HepG2 (cell line): ENCODE measurements at regions of chr2 and their contacts with region 1.

Region 1: GRCh38 chr2:223459328-223459939 is 142.7 kb downstream of the SCG2 start:
- DNase-seq: no peak
- ATAC-seq: no peak
- H3K4me3 ChIP-seq: no peak overlapping the region
- H3K27ac ChIP-seq: no peak overlapping the region
- H3K4me1 ChIP-seq: no peaks in the 10 kb centered on the region
- H3K27me3 ChIP-seq: no peaks in the 10 kb centered on the region
- CTCF ChIP-seq: no peak
- EP300 ChIP-seq: no peak
- POLR2A ChIP-seq: no peak
- RAD21 ChIP-seq: no peak

Region 2: GRCh38 chr2:223601932-223602666 is 142.7 kb after region 1 on chr2 and contains the start of gene SCG2:
- CTCF ChIA-PET with region 1: no interaction called
- POLR2A ChIA-PET with region 1: no interaction called
- in situ Hi-C with region 1: no loop called
- intact Hi-C with region 1: loop called (anchors 1 kb)
- DNase-seq: peak; percentile 42
- ATAC-seq: peak; percentile 100
- H3K4me3 ChIP-seq: no peak within 1 kb of the TSS
- H3K27ac ChIP-seq: no peak within 1 kb of the TSS
- H3K4me1 ChIP-seq: no peaks in the 10 kb centered on the region
- H3K27me3 ChIP-seq: peaks cover 0 to 3% of the 10 kb centered on the region in 2 experiments; a peak in 1 of 5 replicates
- CTCF ChIP-seq: 0 out of 2 replicates have a peak, but pooled peaks have one; percentile 5
- EP300 ChIP-seq: no peak
- POLR2A ChIP-seq: no peak
- RAD21 ChIP-seq: no peak
- total RNA-seq, gene SCG2: not detected in 2 replicates